Psoas muscle (tissue), 8 donors: ENCODE measurements at regions of chr11 and their contacts with region 1.

Region 1: DNA sequence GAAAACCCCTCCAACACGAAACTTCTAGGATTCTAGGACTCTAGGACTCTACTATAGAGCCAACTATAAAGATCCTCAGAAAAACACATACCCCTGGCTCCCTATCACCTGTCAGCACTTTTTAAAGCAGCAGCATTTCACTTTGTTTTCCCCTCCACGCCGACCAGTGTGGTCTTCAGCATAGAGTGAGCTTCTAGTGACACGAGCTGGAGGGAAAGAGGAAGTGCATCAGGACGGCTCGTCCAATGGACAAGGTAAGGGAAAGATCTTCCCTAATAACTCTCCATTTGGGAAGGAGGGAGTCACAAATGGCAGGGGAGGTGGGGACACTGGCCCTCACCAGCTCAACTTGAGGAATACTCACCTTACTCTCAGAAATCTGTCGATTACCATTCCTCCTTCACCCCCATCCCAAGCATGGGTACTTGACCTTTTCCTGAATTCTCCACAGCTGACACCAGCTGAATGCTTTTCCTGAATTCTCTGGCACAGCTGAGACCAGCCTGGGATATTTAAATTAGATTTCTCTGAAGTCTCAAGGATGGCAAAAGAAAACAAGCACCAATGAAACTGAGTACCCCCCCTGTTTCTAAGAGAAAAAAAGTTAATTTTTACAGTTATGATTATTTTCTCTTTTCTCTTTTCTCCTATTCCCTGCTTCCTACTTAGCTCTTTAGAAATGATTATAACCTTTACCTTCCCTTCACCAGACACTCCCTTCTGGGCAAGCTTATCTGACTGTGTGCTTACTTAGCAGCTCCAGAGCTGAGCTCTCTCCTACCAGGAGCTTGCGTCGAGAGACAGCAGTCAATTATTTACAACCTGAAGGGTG is 33.3 kb upstream of the NNMT start:
- DNase-seq: peak in 1 of 2 donors; percentile 56
- ATAC-seq: peak in 1 of 4 donors; percentile 16
- H3K4me3 ChIP-seq: no peak overlapping the region
- H3K27ac ChIP-seq: no peak overlapping the region
- H3K4me1 ChIP-seq: peaks cover 34% of the 10 kb centered on the region
- H3K27me3 ChIP-seq: no peaks in the 10 kb centered on the region
- CTCF ChIP-seq: peak; percentile 78

Region 2: GRCh38 chr11:113802621-113803020 is 460.3 kb before region 1 on chr11:
- intact Hi-C with region 1: loop called in 1 of 2 experiments (anchors 5 kb)
- DNase-seq: no peak
- ATAC-seq: no peak
- H3K4me3 ChIP-seq: no peak overlapping the region
- H3K27ac ChIP-seq: no peak overlapping the region
- H3K4me1 ChIP-seq: no peaks in the 10 kb centered on the region
- H3K27me3 ChIP-seq: no peaks in the 10 kb centered on the region
- CTCF ChIP-seq: no peak

Region 3: GRCh38 chr11:113896156-113896879 is 366.6 kb before region 1 on chr11:
- intact Hi-C with region 1: loop called (anchors 1 to 5 kb)
- DNase-seq: no peak
- ATAC-seq: peak; percentile 77 to 91 (median 82)
- H3K4me3 ChIP-seq: no peak overlapping the region
- H3K27ac ChIP-seq: peak overlapping the region; percentile 43
- H3K4me1 ChIP-seq: peaks cover 11% of the 10 kb centered on the region
- H3K27me3 ChIP-seq: no peaks in the 10 kb centered on the region
- CTCF ChIP-seq: peak; percentile 72

Region 4: GRCh38 chr11:113994077-113994954 is 268.6 kb before region 1 on chr11:
- intact Hi-C with region 1: loop called (anchors 1 to 5 kb)
- DNase-seq: no peak
- ATAC-seq: peak in 3 of 4 donors; percentile 47 to 80 (median 69)
- H3K4me3 ChIP-seq: no peak overlapping the region
- H3K27ac ChIP-seq: no peak overlapping the region
- H3K4me1 ChIP-seq: no peaks in the 10 kb centered on the region
- H3K27me3 ChIP-seq: peaks cover 0 to 5% (median 2%) of the 10 kb centered on the region in 3 donors
- CTCF ChIP-seq: peak; percentile 75

Region 5: DNA sequence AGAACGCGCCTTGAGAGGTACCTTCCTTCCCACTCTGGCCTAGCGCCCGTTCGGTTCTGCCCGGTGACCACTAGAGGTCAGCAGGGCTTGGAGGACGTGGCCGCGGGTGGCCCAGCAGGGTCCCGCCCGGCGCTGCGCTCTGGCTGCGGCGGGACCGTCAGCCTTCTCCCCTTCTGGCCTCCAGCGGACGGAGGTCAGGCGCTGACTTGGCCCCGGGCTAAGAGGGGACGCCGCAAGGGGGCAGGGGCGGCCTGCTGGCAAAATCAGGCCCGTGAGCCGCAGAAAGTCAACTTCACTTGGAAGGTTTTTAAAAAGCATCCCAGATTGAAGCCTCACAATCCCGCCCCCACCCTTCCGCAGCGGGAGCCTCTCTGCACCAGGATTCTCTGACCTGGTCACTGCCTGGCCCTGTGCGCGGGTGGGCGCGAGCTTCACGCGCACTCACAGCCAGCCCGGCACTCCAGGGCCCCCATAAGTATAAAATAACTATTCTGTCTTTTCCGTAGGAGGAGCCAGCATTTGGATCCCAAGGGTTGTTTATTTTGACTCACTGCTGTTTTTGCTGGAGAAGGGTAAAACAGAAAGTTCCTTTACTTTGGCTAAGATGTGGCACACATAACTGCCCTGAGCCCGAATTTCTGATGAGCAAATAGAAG is 226.6 kb before region 1 on chr11:
- intact Hi-C with region 1: loop called (anchors 1 to 5 kb)
- DNase-seq: peak; percentile 88 to 94
- ATAC-seq: peak; percentile 85 to 93 (median 88)
- H3K4me3 ChIP-seq: peak overlapping the region; percentile 66
- H3K27ac ChIP-seq: peak overlapping the region; percentile 75
- H3K4me1 ChIP-seq: peaks cover 40% of the 10 kb centered on the region
- H3K27me3 ChIP-seq: no peaks in the 10 kb centered on the region
- CTCF ChIP-seq: peak; percentile 87

Region 6: GRCh38 chr11:114664641-114665040 is 401.7 kb after region 1 on chr11:
- intact Hi-C with region 1: no loop called
- DNase-seq: no peak
- ATAC-seq: no peak
- H3K4me3 ChIP-seq: no peak overlapping the region
- H3K27ac ChIP-seq: no peak overlapping the region
- H3K4me1 ChIP-seq: no peaks in the 10 kb centered on the region
- H3K27me3 ChIP-seq: no peaks in the 10 kb centered on the region
- CTCF ChIP-seq: no peak